ENCODE measurements at regions of chr20 and their contacts with region 1.

Region 1: DNA sequence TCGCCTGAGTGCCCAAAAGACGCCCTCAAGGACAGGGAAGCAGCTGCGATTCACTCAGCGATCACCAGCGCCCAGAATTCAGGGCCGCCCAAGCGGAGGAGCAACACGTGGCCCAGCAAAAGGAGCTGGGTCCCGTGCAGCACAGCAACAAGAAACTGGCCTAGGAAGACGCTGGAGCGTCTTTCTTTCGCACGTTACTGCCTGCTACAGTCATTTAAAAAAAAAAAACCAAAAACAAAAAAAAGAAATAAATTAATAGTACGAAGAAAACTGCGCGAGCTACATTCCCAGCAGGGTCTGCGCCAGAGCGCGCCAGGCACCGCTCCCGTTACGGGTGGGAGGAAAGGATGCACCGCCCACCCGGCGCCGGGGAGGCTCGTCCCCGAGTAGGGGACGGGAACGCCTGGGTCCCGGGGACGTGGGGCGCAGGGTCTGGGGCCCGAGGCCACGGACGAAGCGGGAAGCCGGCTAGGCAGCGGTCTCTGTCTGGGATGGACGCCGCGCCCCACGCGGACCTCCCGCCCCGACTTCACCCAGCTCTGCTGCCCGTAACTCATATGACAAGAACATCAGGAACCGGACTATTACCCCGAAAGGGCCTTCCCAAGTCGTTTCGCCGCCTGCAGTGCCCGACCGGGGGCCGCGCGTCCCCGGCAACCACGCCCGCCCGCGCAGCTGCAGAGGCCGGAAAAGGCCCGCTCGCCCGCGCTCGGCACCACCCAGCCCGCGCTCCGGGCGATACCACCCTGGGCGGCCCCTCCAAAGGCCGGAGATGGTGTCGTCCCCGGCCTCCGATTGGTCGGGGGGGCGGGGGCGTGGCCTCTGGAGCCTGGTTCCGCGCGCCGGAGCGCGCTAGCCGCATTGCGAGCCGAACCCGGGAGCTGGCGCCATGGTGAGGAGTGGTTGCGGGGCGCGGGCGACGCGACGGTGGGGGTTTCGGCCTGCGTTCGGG is at the start of gene NOP56:
- DNase-seq: peak; percentile 86
- H3K4me3 ChIP-seq: peak within 1 kb of the TSS; percentile 94 to 98 (median 96)
- H3K27ac ChIP-seq: peak within 1 kb of the TSS; percentile 51
- H3K4me1 ChIP-seq: peaks cover 25% of the 10 kb centered on the region
- H3K27me3 ChIP-seq: no peaks in the 10 kb centered on the region
- CTCF ChIP-seq: no peak
- POLR2A ChIP-seq: peak; percentile 92
- total RNA-seq, gene NOP56: 305 and 329 TPM in 2 replicates

Region 2: GRCh38 chr20:2101865-2102584 is 550.0 kb before region 1 on chr20:
- CTCF ChIA-PET with region 1: no interaction called
- POLR2A ChIA-PET with region 1: no interaction called
- dilution Hi-C with region 1: no loop called
- intact Hi-C with region 1: loop called (anchors 10 kb)
- DNase-seq: peak; percentile 90
- H3K4me3 ChIP-seq: peak overlapping the region; percentile 49 to 77 (median 65)
- H3K27ac ChIP-seq: peak overlapping the region; percentile 98
- H3K4me1 ChIP-seq: peaks cover 16% of the 10 kb centered on the region
- H3K27me3 ChIP-seq: peaks cover 0 to 2% of the 10 kb centered on the region in 2 experiments
- CTCF ChIP-seq: no peak
- POLR2A ChIP-seq: peak; percentile 75

Region 3: GRCh38 chr20:2470423-2471193 is 181.4 kb before region 1 on chr20 and contains the start of gene SNRPB:
- CTCF ChIA-PET with region 1: no interaction called
- POLR2A ChIA-PET with region 1: interaction called, 5 read pairs
- dilution Hi-C with region 1: no loop called
- intact Hi-C with region 1: loop called (anchors 1 kb)
- DNase-seq: peak; percentile 98
- H3K4me3 ChIP-seq: peak within 1 kb of the TSS; percentile 87 to 98 (median 91)
- H3K27ac ChIP-seq: peak within 1 kb of the TSS; percentile 86
- H3K4me1 ChIP-seq: peaks cover 17% of the 10 kb centered on the region
- H3K27me3 ChIP-seq: no peaks in the 10 kb centered on the region
- CTCF ChIP-seq: no peak
- POLR2A ChIP-seq: peak; percentile 98
- total RNA-seq, gene SNRPB: 296 and 323 TPM in 2 replicates

Region 4: GRCh38 chr20:2508631-2509467 is 143.2 kb before region 1 on chr20 and contains the start of gene ZNF343:
- CTCF ChIA-PET with region 1: no interaction called
- POLR2A ChIA-PET with region 1: no interaction called
- dilution Hi-C with region 1: no loop called
- intact Hi-C with region 1: loop called (anchors 5 kb)
- DNase-seq: peak; percentile 90
- H3K4me3 ChIP-seq: peak within 1 kb of the TSS; percentile 73 to 85 (median 77)
- H3K27ac ChIP-seq: peak within 1 kb of the TSS; percentile 46
- H3K4me1 ChIP-seq: peaks cover 10% of the 10 kb centered on the region
- H3K27me3 ChIP-seq: no peaks in the 10 kb centered on the region
- CTCF ChIP-seq: no peak
- POLR2A ChIP-seq: peak; percentile 86
- total RNA-seq, gene ZNF343: 7.9 and 9.2 TPM in 2 replicates